RWPE1 (cell line): ENCODE measurements at regions of chr19 and their contacts with region 1.

Region 1: DNA sequence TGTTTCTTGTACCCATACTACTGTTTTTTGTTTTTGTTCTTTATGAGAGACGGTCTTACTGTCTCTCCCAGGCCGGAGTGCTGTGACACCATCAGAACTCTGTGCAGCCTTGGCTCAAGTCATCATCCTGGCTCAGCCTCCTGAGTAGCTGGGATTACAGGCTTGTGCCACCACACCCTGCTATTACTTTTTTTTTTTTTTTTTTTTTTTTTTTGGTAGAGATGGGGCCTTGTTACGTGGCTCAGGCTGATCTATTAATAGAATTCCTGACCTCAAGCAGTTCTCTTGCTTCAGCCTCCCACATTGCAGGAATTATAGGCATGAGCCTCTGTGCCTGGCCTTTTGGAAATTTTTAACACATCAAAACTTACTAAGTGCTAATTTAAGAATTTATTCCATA is 2.9 kb upstream of the ZNF304 start:
- DNase-seq: no peak
- H3K27ac ChIP-seq: no peak overlapping the region
- CTCF ChIP-seq: no peak

Region 2: GRCh38 chr19:57269515-57270250 is 78.5 kb before region 1 on chr19:
- CTCF ChIA-PET with region 1: interaction called, 12 read pairs
- POLR2A ChIA-PET with region 1: no interaction called
- DNase-seq: peak; percentile 70
- H3K27ac ChIP-seq: no peak overlapping the region
- CTCF ChIP-seq: no peak